AG04449 (cell line): ENCODE measurements at regions of chr12 and their contacts with region 1.

Region 1: DNA sequence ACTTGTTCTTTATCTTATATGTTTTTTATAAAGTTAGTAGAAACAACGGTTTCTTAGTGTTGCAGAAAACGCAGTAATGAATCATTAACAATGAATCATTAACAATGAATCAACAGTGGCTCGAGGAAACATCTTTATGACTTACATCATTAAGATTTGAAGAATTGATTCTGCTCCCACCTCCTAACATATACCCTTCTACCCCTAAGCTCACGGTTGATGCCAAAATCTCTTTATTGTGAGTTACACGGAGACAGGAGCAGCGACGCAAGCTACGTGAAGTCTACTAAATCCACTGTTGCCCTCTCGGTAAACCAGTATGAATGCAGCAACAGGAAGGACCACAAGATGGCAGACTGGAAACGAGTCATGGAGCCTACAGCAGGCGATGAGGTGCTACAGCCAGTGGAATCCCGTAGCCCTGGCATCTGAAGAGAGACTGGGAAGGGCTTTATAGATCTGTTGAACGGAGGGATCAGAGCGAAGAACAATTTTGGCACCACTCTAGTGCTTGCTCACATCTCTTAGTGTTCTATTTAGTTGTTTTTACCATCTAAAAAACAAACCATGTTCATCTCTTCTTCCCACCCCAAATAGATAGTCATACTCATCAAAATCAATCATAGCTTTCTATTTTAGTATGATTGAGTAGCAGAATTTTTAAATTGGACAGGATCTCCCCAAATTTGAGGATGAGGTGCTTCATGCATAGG is 332.7 kb downstream of the DUSP6 start:
- DNase-seq: peak; percentile 34
- H3K4me3 ChIP-seq: peak overlapping the region; percentile 52
- CTCF ChIP-seq: peak; percentile 91

Region 2: DNA sequence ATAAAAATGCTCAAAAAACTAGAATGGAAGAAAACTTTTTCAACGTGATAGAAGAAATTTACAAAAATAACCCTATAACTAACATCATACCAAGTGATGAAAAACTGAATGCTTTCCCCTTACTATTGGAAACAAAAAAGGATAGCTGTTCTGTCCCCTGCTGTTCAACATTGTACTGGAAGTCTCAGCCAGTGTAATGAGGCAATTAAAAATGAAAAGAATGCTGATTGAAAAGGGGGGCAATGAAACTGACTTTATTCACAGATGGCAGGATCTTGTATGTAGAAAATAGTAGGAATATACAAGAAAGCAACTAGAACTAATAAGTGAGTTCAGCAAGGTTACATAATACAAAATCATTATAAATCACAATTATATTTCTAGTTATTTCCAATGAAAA is 101.4 kb before region 1 on chr12:
- CTCF ChIA-PET with region 1: no interaction called
- POLR2A ChIA-PET with region 1: no interaction called
- DNase-seq: no peak
- H3K4me3 ChIP-seq: no peak overlapping the region
- CTCF ChIP-seq: no peak

Region 3: GRCh38 chr12:89029961-89030360 is 10.4 kb after region 1 on chr12:
- CTCF ChIA-PET with region 1: interaction called, 20 read pairs
- POLR2A ChIA-PET with region 1: no interaction called
- DNase-seq: no peak
- H3K4me3 ChIP-seq: no peak overlapping the region
- CTCF ChIP-seq: no peak

Region 4: GRCh38 chr12:89040146-89040964 is 20.8 kb after region 1 on chr12:
- CTCF ChIA-PET with region 1: interaction called, 11 read pairs
- POLR2A ChIA-PET with region 1: no interaction called
- DNase-seq: peak; percentile 36
- H3K4me3 ChIP-seq: no peak overlapping the region
- CTCF ChIP-seq: no peak

Region 5: GRCh38 chr12:89162704-89163261 is 143.2 kb after region 1 on chr12:
- CTCF ChIA-PET with region 1: no interaction called
- POLR2A ChIA-PET with region 1: no interaction called
- DNase-seq: peak; percentile 98
- H3K4me3 ChIP-seq: no peak overlapping the region
- CTCF ChIP-seq: no peak

Region 6: DNA sequence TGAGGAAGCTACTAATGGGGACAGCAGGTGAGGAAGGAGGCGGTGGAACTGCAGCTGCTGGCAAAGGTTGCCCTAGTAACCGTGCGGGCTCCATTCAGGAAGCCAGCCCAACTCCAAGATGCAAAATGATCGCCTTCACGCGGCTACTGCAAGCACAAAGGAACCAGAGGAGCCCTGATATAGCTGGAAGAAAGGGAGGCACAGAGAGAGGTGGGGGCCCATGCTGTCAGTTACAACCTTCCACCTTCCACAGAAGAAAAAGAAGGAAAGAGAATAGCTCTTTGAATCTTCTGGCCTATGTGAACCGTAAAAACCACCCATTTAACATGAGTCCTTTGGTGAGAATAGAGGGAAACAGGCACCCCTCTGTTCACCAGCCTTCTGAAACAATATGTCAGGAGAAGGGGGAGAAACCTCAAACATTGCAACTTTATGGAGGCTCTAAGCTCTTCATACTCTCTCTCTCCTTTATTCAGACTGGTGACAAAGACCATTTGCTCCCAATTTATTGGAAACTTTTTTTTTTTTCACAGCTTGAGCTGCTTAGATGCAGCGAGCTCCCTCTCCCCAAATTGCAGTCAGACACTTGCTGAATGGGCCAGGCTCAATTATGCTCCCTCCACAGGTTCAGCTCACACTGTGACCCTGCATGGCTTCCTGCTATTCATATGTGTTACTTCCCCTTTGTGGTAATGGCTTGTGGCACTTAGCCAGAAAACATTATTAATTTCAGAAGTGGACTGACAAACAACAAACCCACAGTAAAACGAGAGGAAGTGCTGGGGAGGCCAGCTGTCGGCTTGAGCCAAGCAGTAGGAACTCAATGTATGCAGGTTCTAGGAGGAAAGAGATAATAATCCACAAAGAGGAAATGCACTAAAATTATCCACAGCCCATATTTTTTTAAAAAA is 326.5 kb after region 1 on chr12:
- CTCF ChIA-PET with region 1: interaction called, 12 read pairs
- POLR2A ChIA-PET with region 1: no interaction called
- DNase-seq: no peak
- H3K4me3 ChIP-seq: no peak overlapping the region
- CTCF ChIP-seq: no peak

Region 7: GRCh38 chr12:89352492-89353187 is 333.1 kb after region 1 on chr12 and contains the start of gene DUSP6:
- CTCF ChIA-PET with region 1: interaction called, 12 read pairs
- POLR2A ChIA-PET with region 1: interaction called, 3 read pairs
- DNase-seq: peak; percentile 96
- H3K4me3 ChIP-seq: peak within 1 kb of the TSS; percentile 88
- CTCF ChIP-seq: no peak

Region 8: DNA sequence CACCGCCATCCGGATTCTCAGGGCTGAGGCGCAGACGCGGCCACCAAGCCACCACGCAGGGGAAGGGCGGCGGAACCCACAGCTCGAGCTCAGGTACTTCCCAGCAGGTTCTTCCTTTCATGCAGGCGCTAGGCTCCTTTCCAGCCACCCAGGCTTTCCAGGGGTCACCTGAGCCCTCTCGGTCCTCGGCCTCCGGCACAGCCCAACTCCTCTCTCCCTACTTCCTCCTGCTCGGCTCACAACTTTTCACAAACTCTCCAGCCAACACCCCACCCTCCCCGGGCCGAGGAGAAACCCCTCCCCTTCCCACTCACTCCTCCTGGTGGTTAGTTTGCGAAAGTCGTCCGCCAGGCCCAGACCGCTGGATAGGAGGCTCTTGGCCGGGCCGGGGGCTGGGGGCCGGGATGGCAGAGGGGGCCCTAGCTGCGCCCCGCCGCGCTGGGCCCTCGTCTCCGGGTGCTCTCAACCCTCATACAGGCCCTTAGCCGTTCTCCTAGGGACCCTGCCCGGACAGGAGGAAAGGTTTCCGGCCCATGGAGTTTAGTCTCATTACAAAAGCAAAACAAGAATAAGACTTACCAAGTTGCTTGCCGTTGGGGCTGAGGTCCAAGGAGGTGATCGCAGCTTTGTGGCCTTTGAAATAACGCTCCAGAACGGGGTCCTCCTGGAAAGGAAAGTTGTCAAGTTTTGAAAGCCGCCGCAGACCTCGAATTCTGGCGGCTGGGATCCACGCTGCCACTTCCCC is 505.1 kb after region 1 on chr12 and contains the start of gene GALNT4:
- CTCF ChIA-PET with region 1: interaction called, 265 read pairs
- POLR2A ChIA-PET with region 1: no interaction called
- DNase-seq: peak; percentile 40
- H3K4me3 ChIP-seq: peak within 1 kb of the TSS; percentile 97
- CTCF ChIP-seq: peak; percentile 90